Activated CD4-positive, alpha-beta memory T cell treated with anti-CD3 and anti-CD28 coated beads for 36 hours (primary cell): ENCODE measurements at regions of chr7 and their contacts with region 1.

Region 1: DNA sequence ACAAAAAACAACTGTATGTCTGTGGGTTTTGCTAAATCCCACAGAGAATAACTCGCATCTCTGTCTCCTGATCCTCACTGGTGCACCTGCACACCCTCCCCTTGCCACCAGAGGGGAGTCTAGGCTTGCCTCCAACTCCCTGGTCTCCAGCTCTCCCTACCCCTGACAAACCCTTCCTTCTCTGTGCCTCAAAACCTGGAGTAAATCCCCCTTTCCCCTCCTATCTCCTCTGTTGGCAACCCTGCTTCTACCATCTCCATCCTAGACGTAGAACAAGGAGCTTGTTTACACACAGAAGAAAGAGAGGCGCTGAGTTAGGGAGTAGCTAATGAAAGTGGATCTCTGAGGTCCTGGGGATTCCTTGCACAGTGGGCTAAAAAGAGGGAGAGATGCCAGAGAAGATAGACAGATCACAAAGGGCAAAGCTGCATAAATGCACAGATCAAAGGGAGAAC is 6.0 kb downstream of the MBLAC1 start:
- DNase-seq: peak; percentile 79
- H3K4me3 Mint-ChIP-seq: no peak overlapping the region
- H3K27ac Mint-ChIP-seq: no peak overlapping the region
- H3K4me1 Mint-ChIP-seq: peaks cover 14% of the 10 kb centered on the region
- H3K27me3 Mint-ChIP-seq: no peaks in the 10 kb centered on the region

Region 2: GRCh38 chr7:99719996-99720769 is 412.5 kb before region 1 on chr7:
- CTCF ChIA-PET with region 1: no interaction called
- POLR2A ChIA-PET with region 1: no interaction called
- intact Hi-C with region 1: no loop called
- DNase-seq: no peak
- H3K4me3 Mint-ChIP-seq: no peak overlapping the region
- H3K27ac Mint-ChIP-seq: no peak overlapping the region
- H3K4me1 Mint-ChIP-seq: peaks cover 13% of the 10 kb centered on the region
- H3K27me3 Mint-ChIP-seq: no peaks in the 10 kb centered on the region

Region 3: DNA sequence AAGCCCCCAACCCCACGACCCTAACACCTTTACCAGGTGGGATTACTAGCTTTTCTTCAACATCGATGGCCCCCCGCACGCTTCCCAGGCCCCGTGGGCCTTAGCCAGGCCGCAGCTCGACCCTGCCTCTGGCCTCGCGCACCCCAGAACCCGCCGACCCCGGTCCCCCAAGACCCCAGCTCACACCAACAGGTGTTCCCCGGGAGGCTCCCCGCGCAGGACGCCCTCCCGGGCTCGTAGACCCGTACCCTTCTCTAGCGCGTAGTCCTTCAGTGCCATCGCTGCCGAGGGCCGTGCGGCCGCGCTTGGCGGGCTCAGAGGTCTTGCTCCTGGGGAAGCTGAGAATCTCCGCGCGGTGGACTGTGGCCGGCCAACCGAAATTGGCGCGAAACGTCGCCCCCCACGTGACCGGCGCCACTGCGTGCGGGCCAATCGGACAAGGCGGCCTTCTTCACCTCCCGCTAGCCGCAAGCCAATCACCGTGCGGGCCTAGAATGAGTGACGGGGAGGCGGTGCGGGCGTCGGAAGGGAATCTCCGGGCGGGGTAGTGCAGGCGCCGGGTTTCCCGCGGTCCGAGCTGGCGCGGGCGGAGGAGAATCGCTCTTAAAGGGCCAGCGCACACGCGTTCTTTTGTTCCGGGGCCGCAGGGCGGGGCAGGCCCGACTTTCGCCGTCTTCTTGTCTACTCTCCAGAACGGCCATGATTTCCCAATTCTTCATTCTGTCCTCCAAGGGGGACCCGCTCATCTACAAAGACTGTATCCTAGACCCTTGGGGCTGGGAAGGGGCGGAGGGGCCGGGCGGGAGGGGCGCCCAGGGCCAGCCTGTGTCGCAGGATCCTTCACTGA is 31.5 kb before region 1 on chr7 and contains the starts of genes AP4M1 and MCM7:
- CTCF ChIA-PET with region 1: interaction called, 21 read pairs
- POLR2A ChIA-PET with region 1: interaction called, 10 read pairs
- intact Hi-C with region 1: loop called (anchors 1 kb)
- DNase-seq: peak; percentile 99
- H3K4me3 Mint-ChIP-seq: peak within 1 kb of the TSS; percentile 90
- H3K27ac Mint-ChIP-seq: peak within 1 kb of the TSS; percentile 95
- H3K4me1 Mint-ChIP-seq: peaks cover 40% of the 10 kb centered on the region
- H3K27me3 Mint-ChIP-seq: no peaks in the 10 kb centered on the region
- total RNA-seq, gene AP4M1: 11.3 to 12.2 TPM
- total RNA-seq, gene MCM7: 393 to 398 TPM

Region 4: GRCh38 chr7:100177045-100178001 is 44.6 kb after region 1 on chr7 and contains the starts of genes GPC2 and STAG3:
- CTCF ChIA-PET with region 1: interaction called, 10 read pairs
- POLR2A ChIA-PET with region 1: no interaction called
- intact Hi-C with region 1: no loop called
- DNase-seq: peak; percentile 99
- H3K4me3 Mint-ChIP-seq: peak within 1 kb of the TSS; percentile 74
- H3K27ac Mint-ChIP-seq: no peak within 1 kb of the TSS
- H3K4me1 Mint-ChIP-seq: peaks cover 34% of the 10 kb centered on the region
- H3K27me3 Mint-ChIP-seq: no peaks in the 10 kb centered on the region
- total RNA-seq, gene GPC2: 4.8 to 5.5 TPM
- total RNA-seq, gene STAG3: 20.8 to 20.9 TPM

Region 5: DNA sequence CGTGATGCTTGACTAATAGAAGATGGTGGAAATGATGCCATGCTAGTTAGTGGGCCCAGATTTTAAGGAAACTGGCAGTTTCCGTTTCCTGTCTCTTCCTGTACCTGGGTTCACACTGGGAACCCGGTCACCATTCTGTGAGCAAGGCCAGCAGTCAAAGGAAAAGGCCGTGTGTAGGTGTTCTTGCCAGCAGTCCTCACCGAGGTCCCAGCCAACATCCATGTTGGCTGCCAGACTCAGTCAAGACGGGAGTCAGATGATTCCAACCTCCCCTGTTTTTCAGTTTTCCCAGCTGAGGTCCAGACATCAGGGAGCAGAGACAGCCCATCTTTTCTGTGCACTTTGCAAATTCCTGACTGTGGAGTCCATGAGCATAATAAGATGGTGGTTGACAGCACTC is 210.0 kb after region 1 on chr7:
- CTCF ChIA-PET with region 1: interaction called, 9 read pairs
- POLR2A ChIA-PET with region 1: no interaction called
- intact Hi-C with region 1: loop called (anchors 5 kb)
- DNase-seq: no peak
- H3K4me3 Mint-ChIP-seq: no peak overlapping the region
- H3K27ac Mint-ChIP-seq: peak overlapping the region; percentile 64
- H3K4me1 Mint-ChIP-seq: peaks cover 41% of the 10 kb centered on the region
- H3K27me3 Mint-ChIP-seq: no peaks in the 10 kb centered on the region